Activated CD4-positive, alpha-beta T cell treated with anti-CD3 and anti-CD28 coated beads for 36 hours (primary cell): ENCODE measurements at regions of chr2 and their contacts with region 1.

Region 1: GRCh38 chr2:209960676-209961630 is 41.5 kb upstream of the RPE start:
- DNase-seq: peak; percentile 68
- ATAC-seq: peak; percentile 80
- H3K4me3 Mint-ChIP-seq: no peak overlapping the region
- H3K27ac Mint-ChIP-seq: no peak overlapping the region
- H3K4me1 Mint-ChIP-seq: no peaks in the 10 kb centered on the region
- H3K27me3 Mint-ChIP-seq: no peaks in the 10 kb centered on the region

Region 2: DNA sequence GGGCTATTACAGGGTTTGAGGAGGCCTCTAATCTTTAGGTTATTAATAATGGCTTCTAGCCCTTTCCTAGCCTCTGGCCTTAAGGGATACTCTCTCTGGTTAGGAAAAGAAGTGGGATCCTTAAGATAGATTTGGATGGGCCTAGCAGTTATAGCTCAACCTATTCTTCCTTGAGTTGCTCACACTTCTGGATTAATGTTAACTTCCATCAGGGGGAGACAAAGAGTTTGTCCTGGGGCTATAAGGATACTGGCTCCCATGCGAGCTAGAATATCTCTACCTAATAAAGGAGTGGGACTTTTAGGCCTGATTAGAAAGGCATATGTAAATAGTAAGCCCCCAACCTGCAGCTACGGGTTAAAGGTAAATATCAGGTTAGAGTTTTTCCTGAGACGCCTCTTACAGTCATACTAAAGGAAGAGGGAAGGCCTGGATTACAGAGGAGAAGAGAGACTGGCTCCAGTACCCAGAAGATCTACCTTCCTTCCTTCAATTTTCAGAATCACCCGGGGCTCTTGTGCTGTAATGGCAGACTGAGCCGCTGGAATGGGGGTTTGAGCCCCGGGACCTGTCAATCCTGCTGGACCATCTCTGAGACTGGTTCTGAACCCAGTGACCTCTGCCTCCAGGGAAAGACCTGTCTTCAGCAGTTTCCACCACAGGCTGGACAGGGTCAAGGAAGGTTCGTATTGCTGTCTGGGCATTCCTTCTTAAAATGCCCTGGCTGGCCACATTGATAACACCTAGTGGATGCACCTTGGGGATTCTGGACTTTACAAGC is 1568.5 kb before region 1 on chr2:
- CTCF ChIA-PET with region 1: interaction called, 3 read pairs
- POLR2A ChIA-PET with region 1: no interaction called
- intact Hi-C with region 1: loop called in 1 of 2 experiments (anchors 10 kb)
- DNase-seq: no peak
- ATAC-seq: no peak
- H3K4me3 Mint-ChIP-seq: no peak overlapping the region
- H3K27ac Mint-ChIP-seq: no peak overlapping the region
- H3K4me1 Mint-ChIP-seq: no peaks in the 10 kb centered on the region
- H3K27me3 Mint-ChIP-seq: peaks cover 6% of the 10 kb centered on the region

Region 3: GRCh38 chr2:209988010-209988409 is 27.1 kb after region 1 on chr2:
- CTCF ChIA-PET with region 1: no interaction called
- POLR2A ChIA-PET with region 1: no interaction called
- intact Hi-C with region 1: no loop called
- DNase-seq: no peak
- ATAC-seq: peak; percentile 74
- H3K4me3 Mint-ChIP-seq: no peak overlapping the region
- H3K27ac Mint-ChIP-seq: no peak overlapping the region
- H3K4me1 Mint-ChIP-seq: peaks cover 3% of the 10 kb centered on the region
- H3K27me3 Mint-ChIP-seq: peaks cover 7% of the 10 kb centered on the region

Region 4: GRCh38 chr2:211144974-211145655 is 1184.2 kb after region 1 on chr2:
- CTCF ChIA-PET with region 1: no interaction called
- POLR2A ChIA-PET with region 1: no interaction called
- intact Hi-C with region 1: loop called in 1 of 2 experiments (anchors 5 kb)
- DNase-seq: no peak
- ATAC-seq: no peak
- H3K4me3 Mint-ChIP-seq: no peak overlapping the region
- H3K27ac Mint-ChIP-seq: no peak overlapping the region
- H3K4me1 Mint-ChIP-seq: no peaks in the 10 kb centered on the region
- H3K27me3 Mint-ChIP-seq: no peaks in the 10 kb centered on the region